Transverse colon (tissue), 4 donors: ENCODE measurements at regions of chr1 and their contacts with region 1.

Region 1: DNA sequence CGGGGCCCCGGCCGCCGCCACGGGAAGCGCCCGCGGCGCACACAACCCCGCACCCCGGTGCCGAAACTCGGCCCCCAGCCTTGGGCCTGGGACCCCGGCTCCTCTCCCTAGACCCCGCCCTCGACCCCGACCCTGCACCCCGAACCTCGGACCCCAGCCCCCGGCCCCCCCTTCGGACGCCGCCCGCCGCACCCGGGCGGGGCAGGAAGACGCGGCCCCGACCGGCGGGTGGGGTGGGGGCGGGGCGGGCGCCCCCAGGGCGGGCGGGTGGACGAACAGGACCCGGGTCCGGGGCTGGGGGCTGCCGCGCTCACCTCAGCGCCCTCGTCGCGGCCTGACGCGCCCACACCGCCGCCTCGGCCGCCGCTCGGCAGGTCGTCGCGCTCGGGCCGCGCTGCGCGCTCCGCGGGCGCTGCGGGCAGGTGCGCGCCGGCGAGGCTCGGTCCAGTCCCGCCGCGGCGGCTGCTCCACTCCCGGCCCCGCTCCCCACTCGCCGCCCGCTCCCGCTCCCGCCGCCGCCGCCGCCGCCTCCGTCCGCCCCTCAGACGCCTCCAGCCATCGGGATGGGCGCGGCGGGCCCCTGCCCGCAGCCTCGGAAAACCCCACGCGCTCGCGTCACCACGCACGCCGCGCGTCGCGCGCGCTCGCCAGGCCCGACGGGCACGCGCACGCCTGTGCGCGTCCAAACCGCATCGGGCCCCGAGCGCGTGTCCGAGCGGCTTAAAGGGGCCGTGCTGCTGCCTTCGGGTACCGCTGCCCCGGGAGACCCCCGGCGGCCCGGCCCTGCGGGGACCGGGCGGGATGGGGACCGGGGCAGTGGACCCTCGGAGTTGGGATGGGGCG is at the start of gene GNB1:
- DNase-seq: peak; percentile 91
- H3K4me3 ChIP-seq: peak within 1 kb of the TSS; percentile 79 to 99 (median 91)
- H3K27ac ChIP-seq: peak within 1 kb of the TSS; percentile 93 to 99 (median 97)
- H3K4me1 ChIP-seq: peaks cover 46 to 75% (median 74%) of the 10 kb centered on the region in 4 donors
- H3K27me3 ChIP-seq: no peaks in the 10 kb centered on the region
- CTCF ChIP-seq: no peak
- EP300 ChIP-seq: no peak
- POLR2A ChIP-seq: no peak
- total RNA-seq, gene GNB1: 123 to 191 (median 174) TPM

Region 2: DNA sequence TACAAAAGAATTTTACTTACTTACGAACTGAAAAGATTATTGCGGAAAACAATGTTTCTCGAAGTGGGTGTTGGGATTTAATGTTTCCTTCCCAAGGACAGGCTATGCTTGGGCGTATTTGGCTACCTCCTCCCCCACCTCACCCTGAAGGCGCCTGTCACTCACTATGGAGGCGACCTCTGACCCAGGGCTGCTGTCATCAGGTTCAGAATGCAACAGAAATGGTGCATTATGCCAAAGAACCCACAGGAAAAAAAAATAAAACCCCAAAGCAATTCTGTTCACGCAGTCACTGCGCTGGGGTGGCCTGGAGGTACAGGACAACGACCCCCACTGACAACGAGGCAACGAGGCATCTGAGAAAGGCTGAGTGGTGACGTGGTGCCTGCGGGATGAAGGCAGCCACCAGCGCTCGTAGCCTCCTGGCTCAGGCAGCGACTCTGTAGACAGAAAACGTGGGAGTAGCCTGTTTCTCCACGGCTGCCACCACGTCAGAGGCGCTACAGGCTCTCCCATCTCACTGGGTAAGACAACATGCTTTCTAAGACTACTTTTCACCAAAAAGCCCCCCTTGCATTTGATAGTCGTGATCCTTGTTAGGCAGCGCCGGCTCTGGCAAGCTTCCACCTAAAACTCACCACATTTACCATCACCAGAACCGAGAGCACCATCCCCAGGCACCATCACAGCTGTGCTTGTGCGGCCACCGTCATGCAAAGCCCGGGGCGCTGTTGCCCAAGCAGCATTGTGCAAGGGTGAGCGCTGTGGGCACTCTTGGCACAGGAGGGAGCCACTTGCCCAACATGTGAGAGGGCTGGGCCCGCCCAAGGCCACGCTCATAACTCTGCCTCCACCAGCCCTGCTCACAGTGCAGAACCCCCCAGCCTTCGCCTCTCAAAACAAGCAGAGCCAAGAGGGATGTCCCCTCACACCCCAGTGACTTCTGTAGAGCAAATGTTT is 126.8 kb before region 1 on chr1:
- in situ Hi-C with region 1: loop called in 1 of 4 experiments (anchors 25 kb)
- intact Hi-C with region 1: no loop called
- DNase-seq: no peak
- H3K4me3 ChIP-seq: no peak overlapping the region
- H3K27ac ChIP-seq: no peak overlapping the region
- H3K4me1 ChIP-seq: peaks cover 7 to 11% (median 8%) of the 10 kb centered on the region in 4 donors
- H3K27me3 ChIP-seq: no peaks in the 10 kb centered on the region
- CTCF ChIP-seq: no peak
- EP300 ChIP-seq: no peak
- POLR2A ChIP-seq: no peak